MCF 10A (cell line): ENCODE measurements at regions of chr12 and their contacts with region 1.

Region 1: DNA sequence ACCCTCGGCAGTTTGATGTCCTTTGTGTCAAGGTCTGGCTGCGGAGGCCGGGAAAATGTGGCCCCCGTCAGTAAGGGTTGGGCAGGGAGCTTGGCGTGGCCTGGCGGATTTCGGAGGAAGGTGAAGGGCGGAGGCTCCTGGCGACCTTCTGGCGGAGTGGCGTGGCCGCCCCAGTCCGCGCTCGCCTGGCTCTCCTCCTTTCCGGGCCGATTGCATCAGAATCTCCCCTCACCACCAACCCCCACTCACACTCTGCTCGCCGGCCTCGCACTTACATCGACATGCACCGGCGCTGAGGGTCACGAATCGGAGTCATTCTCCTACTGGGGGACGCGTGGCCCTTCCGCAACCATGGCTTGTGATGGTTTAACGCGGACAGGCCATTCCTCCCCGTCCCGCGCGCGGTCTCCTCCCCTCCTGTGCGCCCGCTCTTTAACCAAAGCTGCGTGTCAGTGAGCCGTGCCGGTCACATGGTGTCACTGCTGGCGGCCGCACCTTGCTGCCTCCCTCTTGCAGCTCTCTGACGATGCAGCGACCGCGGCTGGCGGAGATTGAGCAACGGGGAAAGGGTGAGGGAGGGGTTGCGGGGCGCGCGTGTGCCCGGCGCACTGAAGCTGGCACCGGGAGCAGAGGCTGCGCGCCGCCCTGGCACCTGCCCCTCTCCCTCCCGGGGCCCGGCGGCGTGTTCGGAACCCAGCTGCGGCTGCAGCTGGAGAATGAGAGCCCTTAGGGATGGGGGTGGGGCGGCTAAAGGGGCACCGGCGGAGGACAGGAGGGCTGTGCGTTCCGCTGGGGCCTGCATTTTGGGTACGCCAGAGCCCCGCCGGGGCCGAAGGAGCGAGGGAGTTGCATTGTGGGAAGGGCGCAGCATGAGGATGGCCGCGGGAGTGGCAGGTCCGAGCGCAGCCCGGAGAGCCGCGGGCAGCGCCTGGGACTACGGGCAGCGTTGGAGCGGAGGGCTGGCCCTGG is at the start of gene SLC38A1:
- DNase-seq: peak; percentile 96
- H3K4me3 Mint-ChIP-seq: no peak within 1 kb of the TSS
- H3K27ac Mint-ChIP-seq: no peak within 1 kb of the TSS
- H3K4me1 Mint-ChIP-seq: peaks cover 6% of the 10 kb centered on the region
- H3K27me3 Mint-ChIP-seq: no peaks in the 10 kb centered on the region
- CTCF ChIP-seq: no peak
- total RNA-seq, gene SLC38A1: 327 and 339 TPM in 2 replicates

Region 2: DNA sequence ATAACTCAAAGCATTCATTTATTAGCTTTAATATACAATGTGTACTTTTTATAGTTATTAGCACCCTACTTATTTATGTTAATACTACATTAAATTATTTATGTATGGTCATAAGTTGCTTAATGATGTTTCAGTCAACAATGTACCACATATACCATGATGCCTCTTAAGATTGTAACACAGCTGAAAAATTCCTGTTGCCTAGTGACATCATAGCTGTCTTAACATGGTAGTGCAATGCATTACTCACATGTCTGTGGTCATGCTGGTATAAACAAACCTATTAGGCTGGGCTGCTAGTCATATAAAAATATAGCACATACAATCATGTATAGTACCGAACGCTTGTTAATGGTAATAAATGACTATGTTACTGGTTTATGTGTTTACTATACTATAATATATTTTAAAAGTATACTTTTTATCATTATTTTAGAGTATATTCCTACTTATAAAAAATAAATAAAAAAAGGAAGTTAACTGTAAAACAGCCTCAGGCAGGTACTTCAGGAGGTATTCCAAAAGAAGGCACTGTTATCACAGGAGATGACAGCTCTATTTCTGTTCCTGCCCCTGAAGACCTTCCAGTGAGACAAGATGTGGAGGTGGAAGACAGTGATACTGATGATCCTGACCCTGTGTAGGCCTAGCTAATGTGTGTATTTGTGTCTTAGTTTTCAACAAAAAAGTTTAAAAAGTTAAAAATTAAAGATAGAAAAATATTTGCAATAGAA is 932.4 kb before region 1 on chr12:
- CTCF ChIA-PET with region 1: no interaction called
- POLR2A ChIA-PET with region 1: no interaction called
- intact Hi-C with region 1: no loop called
- DNase-seq: peak; percentile 77
- H3K4me3 Mint-ChIP-seq: no peak overlapping the region
- H3K27ac Mint-ChIP-seq: no peak overlapping the region
- H3K4me1 Mint-ChIP-seq: peaks cover 18% of the 10 kb centered on the region
- H3K27me3 Mint-ChIP-seq: no peaks in the 10 kb centered on the region
- CTCF ChIP-seq: no peak

Region 3: DNA sequence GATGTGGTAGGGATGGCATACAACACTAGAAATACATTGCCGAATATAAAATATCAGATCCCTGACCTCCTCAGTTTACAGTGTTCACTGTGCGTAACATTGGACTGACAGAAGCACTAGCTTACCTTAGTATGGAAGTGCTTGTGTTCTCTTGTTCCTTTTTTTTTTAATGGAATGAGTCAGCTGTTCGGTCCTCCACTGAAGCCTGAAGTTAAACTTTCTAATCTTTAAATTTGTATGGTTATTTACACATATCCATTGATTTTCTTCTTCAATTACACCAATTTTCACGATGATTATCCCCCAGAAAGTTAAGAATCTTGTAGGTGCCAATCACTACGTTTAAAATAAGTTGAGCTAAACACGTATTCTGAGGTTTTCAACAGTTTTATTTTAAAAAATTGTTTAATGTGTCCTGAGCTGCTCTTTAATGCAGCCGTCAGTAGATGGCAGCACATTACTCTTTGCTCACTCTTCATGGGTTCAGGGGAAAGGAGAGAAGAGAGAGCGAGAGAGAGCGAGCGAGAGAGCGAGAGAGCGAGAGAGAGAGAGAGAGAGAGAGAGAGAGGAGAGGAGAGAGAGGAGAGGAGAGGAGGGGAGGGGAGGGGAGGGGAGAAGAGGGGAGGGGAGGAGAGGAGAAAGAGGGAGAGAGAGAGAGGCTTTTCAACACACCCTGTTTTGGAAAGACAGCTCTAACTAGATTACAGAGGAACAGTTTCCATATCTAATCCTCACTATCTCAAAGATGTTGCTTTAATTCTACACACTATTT is 143.8 kb before region 1 on chr12:
- CTCF ChIA-PET with region 1: interaction called, 5 read pairs
- POLR2A ChIA-PET with region 1: interaction called, 19 read pairs
- intact Hi-C with region 1: no loop called
- DNase-seq: peak; percentile 87
- H3K4me3 Mint-ChIP-seq: peak overlapping the region; percentile 64
- H3K27ac Mint-ChIP-seq: peak overlapping the region; percentile 28
- H3K4me1 Mint-ChIP-seq: peaks cover 13% of the 10 kb centered on the region
- H3K27me3 Mint-ChIP-seq: peaks cover 16% of the 10 kb centered on the region
- CTCF ChIP-seq: peak; percentile 69

Region 4: DNA sequence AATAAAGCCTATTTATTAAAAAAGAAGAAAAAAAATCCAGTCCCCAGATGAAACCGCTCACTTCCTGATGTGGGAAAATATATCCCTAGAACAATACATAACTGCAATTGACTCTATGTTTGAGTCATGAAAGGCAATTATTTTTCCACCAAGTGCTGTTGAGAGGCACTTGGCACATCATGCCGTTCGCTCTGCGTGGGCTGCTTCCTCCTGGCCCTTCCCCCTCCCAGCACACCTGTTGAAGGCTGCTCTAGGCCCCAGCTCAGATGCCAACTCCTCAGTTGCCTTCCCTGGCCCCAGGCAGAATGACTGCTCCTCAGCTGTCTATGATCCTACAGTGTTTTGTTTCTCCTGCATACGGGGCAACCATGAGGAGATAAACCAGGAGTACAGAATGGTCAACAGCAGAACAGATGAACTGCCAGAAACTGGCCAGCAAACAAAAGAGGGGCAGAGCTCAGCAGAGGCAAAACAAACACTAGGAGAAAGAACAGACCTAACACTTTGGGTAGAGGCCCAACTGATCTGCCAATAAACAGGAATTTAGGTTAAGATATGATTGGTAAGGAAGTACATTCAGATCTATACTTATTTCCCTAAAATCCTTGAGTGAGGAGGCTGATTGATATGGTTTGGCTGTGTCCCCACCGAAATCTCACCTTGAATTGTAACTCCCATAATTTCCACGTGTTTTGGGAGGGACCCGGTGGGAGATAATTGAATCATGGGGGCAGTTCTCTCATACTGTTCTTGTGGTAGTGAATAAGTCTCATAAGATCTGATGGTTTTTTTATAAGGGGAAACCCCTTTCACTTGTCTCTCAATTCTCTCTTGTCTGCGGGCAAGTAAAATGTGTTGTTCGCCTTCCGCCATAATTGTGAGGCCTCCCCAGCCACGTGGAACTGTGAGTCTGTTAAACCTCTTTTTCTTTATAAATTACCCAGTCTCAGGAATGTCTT is 58.7 kb before region 1 on chr12:
- CTCF ChIA-PET with region 1: no interaction called
- POLR2A ChIA-PET with region 1: interaction called, 28 read pairs
- intact Hi-C with region 1: no loop called
- DNase-seq: peak; percentile 95
- H3K4me3 Mint-ChIP-seq: no peak overlapping the region
- H3K27ac Mint-ChIP-seq: peak overlapping the region; percentile 52
- H3K4me1 Mint-ChIP-seq: peaks cover 43% of the 10 kb centered on the region
- H3K27me3 Mint-ChIP-seq: no peaks in the 10 kb centered on the region
- CTCF ChIP-seq: no peak

Region 5: GRCh38 chr12:46318037-46318436 is 49.2 kb after region 1 on chr12:
- CTCF ChIA-PET with region 1: interaction called, 3 read pairs
- POLR2A ChIA-PET with region 1: interaction called, 11 read pairs
- intact Hi-C with region 1: no loop called
- DNase-seq: no peak
- H3K4me3 Mint-ChIP-seq: no peak overlapping the region
- H3K27ac Mint-ChIP-seq: no peak overlapping the region
- H3K4me1 Mint-ChIP-seq: no peaks in the 10 kb centered on the region
- H3K27me3 Mint-ChIP-seq: no peaks in the 10 kb centered on the region
- CTCF ChIP-seq: no peak

Region 6: GRCh38 chr12:46382964-46383653 is 114.2 kb after region 1 on chr12:
- CTCF ChIA-PET with region 1: no interaction called
- POLR2A ChIA-PET with region 1: interaction called, 17 read pairs
- intact Hi-C with region 1: no loop called
- DNase-seq: peak; percentile 97
- H3K4me3 Mint-ChIP-seq: peak overlapping the region; percentile 91
- H3K27ac Mint-ChIP-seq: peak overlapping the region; percentile 97
- H3K4me1 Mint-ChIP-seq: peaks cover 33% of the 10 kb centered on the region
- H3K27me3 Mint-ChIP-seq: no peaks in the 10 kb centered on the region
- CTCF ChIP-seq: no peak

Region 7: GRCh38 chr12:46661110-46661845 is 392.4 kb after region 1 on chr12:
- CTCF ChIA-PET with region 1: no interaction called
- POLR2A ChIA-PET with region 1: interaction called, 32 read pairs
- intact Hi-C with region 1: loop called (anchors 5 kb)
- DNase-seq: peak; percentile 79
- H3K4me3 Mint-ChIP-seq: no peak overlapping the region
- H3K27ac Mint-ChIP-seq: peak overlapping the region; percentile 80
- H3K4me1 Mint-ChIP-seq: peaks cover 63% of the 10 kb centered on the region
- H3K27me3 Mint-ChIP-seq: no peaks in the 10 kb centered on the region
- CTCF ChIP-seq: peak; percentile 57

Region 8: DNA sequence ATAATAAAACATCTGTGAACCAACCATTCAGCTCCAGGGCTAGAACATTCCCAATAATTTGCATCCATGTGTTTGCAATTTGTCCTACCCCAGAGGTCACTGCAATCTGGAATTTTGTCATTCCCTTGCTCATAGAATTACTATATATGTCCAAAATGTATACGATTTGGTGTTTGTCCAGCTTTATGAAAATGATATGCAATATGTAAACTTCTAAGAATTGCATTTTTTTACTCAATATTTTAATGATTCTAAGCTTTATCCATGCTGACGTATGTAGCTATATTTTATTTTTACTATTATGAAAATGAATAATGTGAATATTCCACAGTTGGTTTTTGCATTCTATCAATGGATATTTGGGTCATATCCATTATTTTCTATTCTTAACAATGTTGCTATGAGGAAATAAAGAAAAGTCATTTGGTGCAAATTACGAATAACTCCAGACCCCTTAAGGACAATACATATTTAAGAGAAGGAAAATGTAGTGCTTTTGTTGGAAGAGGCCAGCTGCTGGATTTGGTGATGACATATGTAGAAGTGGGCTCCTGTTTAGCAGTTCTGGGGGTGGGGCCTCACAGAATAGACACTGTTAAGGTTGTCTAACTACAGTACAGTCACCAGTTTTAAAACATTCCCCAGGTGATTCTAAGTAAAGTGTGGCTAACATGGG is 417.5 kb after region 1 on chr12:
- CTCF ChIA-PET with region 1: no interaction called
- POLR2A ChIA-PET with region 1: no interaction called
- intact Hi-C with region 1: no loop called
- DNase-seq: no peak
- H3K4me3 Mint-ChIP-seq: no peak overlapping the region
- H3K27ac Mint-ChIP-seq: no peak overlapping the region
- H3K4me1 Mint-ChIP-seq: no peaks in the 10 kb centered on the region
- H3K27me3 Mint-ChIP-seq: no peaks in the 10 kb centered on the region
- CTCF ChIP-seq: no peak